IMR-90 (cell line): ENCODE measurements at regions of chr17 and their contacts with region 1.

Region 1: GRCh38 chr17:8057691-8058114 is 18.8 kb downstream of the ALOX15B start:
- DNase-seq: peak; percentile 75
- ATAC-seq: peak; percentile 94
- H3K4me3 ChIP-seq: no peak overlapping the region
- H3K27ac ChIP-seq: no peak overlapping the region
- H3K4me1 ChIP-seq: peaks cover 2% of the 10 kb centered on the region; the same call in 1 of the 2 replicates
- H3K27me3 ChIP-seq: peaks cover 47% of the 10 kb centered on the region
- CTCF ChIP-seq: peak; percentile 86
- POLR2A ChIP-seq: 0 out of 2 replicates have a peak, but pooled peaks have one; percentile 36
- RAD21 ChIP-seq: peak; percentile 86

Region 2: GRCh38 chr17:7862692-7863437 is 194.8 kb before region 1 on chr17:
- CTCF ChIA-PET with region 1: no interaction called
- POLR2A ChIA-PET with region 1: no interaction called
- dilution Hi-C with region 1: no loop called
- in situ Hi-C with region 1: no loop called
- intact Hi-C with region 1: loop called (anchors 2 kb)
- DNase-seq: peak; percentile 54
- ATAC-seq: no peak
- H3K4me3 ChIP-seq: no peak overlapping the region
- H3K27ac ChIP-seq: no peak overlapping the region
- H3K4me1 ChIP-seq: peaks cover 7% of the 10 kb centered on the region
- H3K27me3 ChIP-seq: no peaks in the 10 kb centered on the region
- CTCF ChIP-seq: peak; percentile 75
- POLR2A ChIP-seq: no peak; the same call in 1 of the 2 replicates
- RAD21 ChIP-seq: peak; percentile 83

Region 3: GRCh38 chr17:7931709-7932482 is 125.8 kb before region 1 on chr17 and contains the starts of genes CNTROB and TRAPPC1:
- CTCF ChIA-PET with region 1: no interaction called
- POLR2A ChIA-PET with region 1: no interaction called
- dilution Hi-C with region 1: no loop called
- in situ Hi-C with region 1: no loop called
- intact Hi-C with region 1: loop called (anchors 5 kb)
- DNase-seq: peak; percentile 99
- ATAC-seq: peak; percentile 96
- H3K4me3 ChIP-seq: peak within 1 kb of the TSS; percentile 88
- H3K27ac ChIP-seq: peak within 1 kb of the TSS; percentile 90
- H3K4me1 ChIP-seq: peaks cover 7% of the 10 kb centered on the region; the same call in 1 of the 2 replicates
- H3K27me3 ChIP-seq: no peaks in the 10 kb centered on the region
- CTCF ChIP-seq: no peak
- POLR2A ChIP-seq: peak; percentile 77; the same call in 1 of the 2 replicates
- RAD21 ChIP-seq: no peak
- total RNA-seq, gene CNTROB: 12.5 and 12.7 TPM in 2 replicates
- total RNA-seq, gene TRAPPC1: 31.4 and 50.4 TPM in 2 replicates

Region 4: DNA sequence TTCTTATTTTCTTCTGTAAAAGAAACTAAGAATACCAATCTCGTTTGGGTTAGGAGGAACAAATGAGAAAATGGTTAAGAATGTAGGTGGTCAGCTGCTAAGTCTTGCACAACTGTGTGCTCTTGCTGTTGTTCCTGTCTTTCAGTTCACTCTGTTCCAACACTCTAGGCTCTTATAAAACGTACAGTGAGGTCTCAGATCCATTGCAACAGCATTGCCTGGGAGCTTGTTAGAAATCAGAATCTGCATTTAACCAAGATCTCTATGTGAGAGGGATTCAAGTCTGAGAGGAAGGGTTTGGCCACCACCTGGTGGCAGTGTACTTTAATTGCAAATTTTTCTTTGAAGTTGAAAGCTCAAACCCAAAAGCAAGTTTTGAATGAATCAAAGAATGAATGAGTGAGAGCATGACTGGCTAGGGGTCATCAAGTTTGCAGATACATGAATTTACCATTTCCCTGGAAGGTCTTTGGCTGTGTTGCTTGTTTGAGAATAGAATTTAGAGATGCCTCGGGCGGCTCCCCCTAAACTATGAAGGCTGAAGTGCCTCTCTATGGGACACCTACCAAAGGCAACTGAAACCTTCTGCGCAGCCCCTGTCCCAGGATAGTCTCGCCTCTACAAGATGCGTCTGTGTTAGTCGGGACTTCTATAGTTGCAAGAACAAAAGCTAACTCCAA is 16.3 kb before region 1 on chr17:
- CTCF ChIA-PET with region 1: interaction called, 15 read pairs
- POLR2A ChIA-PET with region 1: no interaction called
- dilution Hi-C with region 1: no loop called
- in situ Hi-C with region 1: no loop called
- intact Hi-C with region 1: no loop called
- DNase-seq: peak; percentile 73
- ATAC-seq: peak; percentile 84
- H3K4me3 ChIP-seq: no peak overlapping the region
- H3K27ac ChIP-seq: no peak overlapping the region
- H3K4me1 ChIP-seq: no peaks in the 10 kb centered on the region
- H3K27me3 ChIP-seq: peaks cover 47% of the 10 kb centered on the region
- CTCF ChIP-seq: peak; percentile 73
- POLR2A ChIP-seq: no peak
- RAD21 ChIP-seq: peak; percentile 83

Region 5: DNA sequence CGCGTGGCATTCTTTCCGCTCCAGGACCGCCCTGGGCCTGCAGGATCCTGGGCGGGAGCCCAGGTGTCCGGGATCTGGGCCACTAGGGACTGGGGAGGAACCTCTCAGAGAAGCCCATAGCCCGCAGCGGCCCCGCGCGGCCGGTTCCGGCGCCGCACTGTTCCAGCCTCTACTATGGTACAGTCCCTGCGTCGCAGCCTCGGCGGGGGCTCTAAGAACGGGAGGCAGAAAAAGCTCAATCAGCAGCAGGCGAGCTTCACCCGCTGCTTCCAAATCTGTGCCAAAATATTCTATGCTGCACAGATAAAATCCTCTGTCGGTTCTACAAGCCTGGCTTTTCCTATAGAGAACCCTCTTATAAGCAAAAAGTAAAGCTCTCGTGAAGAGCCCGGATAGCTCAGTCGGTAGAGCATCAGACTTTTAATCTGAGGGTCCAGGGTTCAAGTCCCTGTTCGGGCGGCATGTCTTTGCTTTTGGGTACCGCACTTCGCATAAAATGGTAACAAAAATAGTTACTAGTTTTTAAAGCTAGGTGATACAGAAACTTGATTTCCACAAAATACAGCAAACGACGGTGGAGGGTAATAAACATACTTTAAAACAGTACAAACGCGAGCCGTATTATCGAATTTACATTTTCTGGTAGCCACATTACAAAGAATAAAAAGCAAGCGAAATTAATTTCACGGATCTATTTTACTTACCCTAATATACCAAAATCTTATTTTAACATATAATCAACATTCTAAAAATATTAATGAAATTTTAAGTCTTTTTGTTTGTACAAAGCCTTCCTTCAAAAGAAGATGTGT is 61.3 kb after region 1 on chr17:
- CTCF ChIA-PET with region 1: interaction called, 25 read pairs
- POLR2A ChIA-PET with region 1: no interaction called
- dilution Hi-C with region 1: no loop called
- in situ Hi-C with region 1: no loop called
- intact Hi-C with region 1: loop called (anchors 2 kb)
- DNase-seq: peak; percentile 80
- ATAC-seq: peak; percentile 59
- H3K4me3 ChIP-seq: peak overlapping the region; percentile 60
- H3K27ac ChIP-seq: no peak overlapping the region; the same call in 1 of the 2 replicates
- H3K4me1 ChIP-seq: peaks cover 8% of the 10 kb centered on the region; the same call in 1 of the 2 replicates
- H3K27me3 ChIP-seq: peaks cover 26% of the 10 kb centered on the region
- CTCF ChIP-seq: peak; percentile 90
- POLR2A ChIP-seq: no peak
- RAD21 ChIP-seq: peak; percentile 65

Region 6: DNA sequence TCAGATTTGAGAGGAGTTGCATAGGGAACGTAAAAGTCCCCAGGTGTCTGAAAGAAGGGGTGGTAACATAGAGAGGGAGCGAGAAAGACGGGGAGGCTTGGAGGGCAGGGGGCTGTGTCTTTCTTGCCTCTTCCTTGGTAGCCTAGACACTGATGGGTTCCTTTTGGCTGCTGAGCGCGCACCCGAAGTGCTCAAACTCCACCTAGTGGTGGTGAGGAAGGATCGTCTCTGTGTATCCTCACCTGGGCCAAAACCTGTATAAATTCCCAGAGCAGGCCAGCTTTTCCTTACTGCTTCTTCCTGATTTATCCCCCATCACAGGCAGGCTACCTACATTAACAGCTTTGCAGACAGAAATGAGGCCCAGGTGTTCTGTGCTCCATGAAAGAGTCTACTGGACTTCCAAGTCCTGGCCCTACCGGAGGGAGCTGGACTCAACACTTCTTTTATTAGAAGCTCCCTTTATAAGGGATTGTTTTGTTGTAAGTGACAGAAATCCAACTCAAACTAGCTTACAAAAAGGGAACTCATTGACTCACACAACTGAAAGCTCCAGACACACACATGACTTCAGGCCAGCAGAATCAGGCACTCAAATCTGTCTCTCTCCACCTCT is 243.0 kb after region 1 on chr17:
- CTCF ChIA-PET with region 1: interaction called, 3 read pairs
- POLR2A ChIA-PET with region 1: no interaction called
- dilution Hi-C with region 1: no loop called
- in situ Hi-C with region 1: no loop called
- intact Hi-C with region 1: loop called (anchors 2 kb)
- DNase-seq: peak; percentile 64
- ATAC-seq: peak; percentile 98
- H3K4me3 ChIP-seq: no peak overlapping the region
- H3K27ac ChIP-seq: no peak overlapping the region
- H3K4me1 ChIP-seq: no peaks in the 10 kb centered on the region
- H3K27me3 ChIP-seq: no peaks in the 10 kb centered on the region; the same call in 1 of the 2 replicates
- CTCF ChIP-seq: peak; percentile 80
- POLR2A ChIP-seq: no peak
- RAD21 ChIP-seq: peak; percentile 86